Activated B cell treated with CpG ODN at 0.5 μM for 24 hours (primary cell): ENCODE measurements at regions of chr2 and their contacts with region 1.

Region 1: GRCh38 chr2:216081487-216082116 is at the starts of genes PECR and TMEM169:
- DNase-seq: peak; percentile 68
- ATAC-seq: peak; percentile 93
- H3K4me3 Mint-ChIP-seq: peak within 1 kb of the TSS; percentile 95
- H3K27ac Mint-ChIP-seq: peak within 1 kb of the TSS; percentile 85
- H3K4me1 Mint-ChIP-seq: peaks cover 49% of the 10 kb centered on the region
- H3K27me3 Mint-ChIP-seq: no peaks in the 10 kb centered on the region
- CTCF ChIP-seq: no peak
- total RNA-seq, gene PECR: 6.1 and 10.0 TPM in 2 replicates
- total RNA-seq, gene TMEM169: 0.40 and 0.69 TPM in 2 replicates

Region 2: DNA sequence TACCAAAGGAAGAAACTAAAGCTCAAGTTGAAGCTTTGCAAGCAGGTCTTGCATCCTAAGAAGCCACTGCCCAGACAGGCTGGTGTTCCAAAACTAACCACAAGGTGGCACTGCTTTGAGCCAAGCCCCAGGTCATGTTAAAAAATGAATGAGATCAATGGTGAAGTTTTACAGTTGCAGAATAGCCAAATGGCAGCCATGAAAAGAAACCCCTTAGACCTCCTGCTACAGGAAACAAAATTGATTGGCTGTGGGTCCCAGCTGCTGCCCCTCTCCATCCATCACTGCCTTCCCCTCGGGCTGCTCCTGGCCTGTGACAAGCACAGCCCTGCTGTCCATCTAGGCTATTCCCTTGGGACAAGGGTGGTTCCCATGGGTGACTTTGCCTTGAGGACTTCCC is 47.5 kb before region 1 on chr2:
- CTCF ChIA-PET with region 1: no interaction called
- POLR2A ChIA-PET with region 1: interaction called, 3 read pairs
- intact Hi-C with region 1: loop called (anchors 1 kb)
- DNase-seq: peak; percentile 53
- ATAC-seq: peak; percentile 93
- H3K4me3 Mint-ChIP-seq: no peak overlapping the region
- H3K27ac Mint-ChIP-seq: no peak overlapping the region
- H3K4me1 Mint-ChIP-seq: peaks cover 8% of the 10 kb centered on the region
- H3K27me3 Mint-ChIP-seq: no peaks in the 10 kb centered on the region
- CTCF ChIP-seq: peak; percentile 52

Region 3: GRCh38 chr2:216057688-216058193 is 23.9 kb before region 1 on chr2:
- CTCF ChIA-PET with region 1: no interaction called
- POLR2A ChIA-PET with region 1: interaction called, 4 read pairs
- intact Hi-C with region 1: loop called (anchors 1 kb)
- DNase-seq: peak; percentile 25
- ATAC-seq: peak; percentile 83
- H3K4me3 Mint-ChIP-seq: peak overlapping the region; percentile 84
- H3K27ac Mint-ChIP-seq: peak overlapping the region; percentile 96
- H3K4me1 Mint-ChIP-seq: peaks cover 29% of the 10 kb centered on the region
- H3K27me3 Mint-ChIP-seq: no peaks in the 10 kb centered on the region
- CTCF ChIP-seq: no peak

Region 4: DNA sequence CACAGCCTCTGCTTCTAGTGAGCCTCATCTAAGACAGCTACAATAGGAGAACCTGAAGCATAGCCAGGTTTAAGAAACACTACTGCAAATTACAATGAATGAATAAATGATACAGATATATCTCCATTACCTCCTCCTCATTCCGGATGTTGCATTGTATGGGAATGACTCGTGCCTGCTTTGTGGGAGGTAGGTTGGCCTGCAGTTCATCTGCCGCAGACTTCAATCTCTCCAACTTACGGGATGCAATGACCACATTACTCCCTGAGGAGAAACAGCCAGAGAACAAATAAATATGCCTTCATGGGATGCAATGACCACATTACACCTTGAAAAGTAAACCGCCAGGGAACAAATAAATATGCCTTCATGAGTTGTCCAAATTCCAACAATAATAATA is 15.3 kb before region 1 on chr2:
- CTCF ChIA-PET with region 1: no interaction called
- POLR2A ChIA-PET with region 1: no interaction called
- intact Hi-C with region 1: loop called (anchors 2 kb)
- DNase-seq: no peak
- ATAC-seq: no peak
- H3K4me3 Mint-ChIP-seq: no peak overlapping the region
- H3K27ac Mint-ChIP-seq: no peak overlapping the region
- H3K4me1 Mint-ChIP-seq: no peaks in the 10 kb centered on the region
- H3K27me3 Mint-ChIP-seq: no peaks in the 10 kb centered on the region
- CTCF ChIP-seq: no peak

Region 5: GRCh38 chr2:216108967-216109921 is 27.6 kb after region 1 on chr2 and contains the start of gene XRCC5:
- CTCF ChIA-PET with region 1: interaction called, 3 read pairs
- POLR2A ChIA-PET with region 1: interaction called, 15 read pairs
- intact Hi-C with region 1: loop called (anchors 1 kb)
- DNase-seq: peak; percentile 93
- ATAC-seq: peak; percentile 88
- H3K4me3 Mint-ChIP-seq: peak within 1 kb of the TSS; percentile 99
- H3K27ac Mint-ChIP-seq: peak within 1 kb of the TSS; percentile 99
- H3K4me1 Mint-ChIP-seq: peaks cover 57% of the 10 kb centered on the region
- H3K27me3 Mint-ChIP-seq: no peaks in the 10 kb centered on the region
- CTCF ChIP-seq: no peak
- total RNA-seq, gene XRCC5: 303 and 311 TPM in 2 replicates

Region 6: DNA sequence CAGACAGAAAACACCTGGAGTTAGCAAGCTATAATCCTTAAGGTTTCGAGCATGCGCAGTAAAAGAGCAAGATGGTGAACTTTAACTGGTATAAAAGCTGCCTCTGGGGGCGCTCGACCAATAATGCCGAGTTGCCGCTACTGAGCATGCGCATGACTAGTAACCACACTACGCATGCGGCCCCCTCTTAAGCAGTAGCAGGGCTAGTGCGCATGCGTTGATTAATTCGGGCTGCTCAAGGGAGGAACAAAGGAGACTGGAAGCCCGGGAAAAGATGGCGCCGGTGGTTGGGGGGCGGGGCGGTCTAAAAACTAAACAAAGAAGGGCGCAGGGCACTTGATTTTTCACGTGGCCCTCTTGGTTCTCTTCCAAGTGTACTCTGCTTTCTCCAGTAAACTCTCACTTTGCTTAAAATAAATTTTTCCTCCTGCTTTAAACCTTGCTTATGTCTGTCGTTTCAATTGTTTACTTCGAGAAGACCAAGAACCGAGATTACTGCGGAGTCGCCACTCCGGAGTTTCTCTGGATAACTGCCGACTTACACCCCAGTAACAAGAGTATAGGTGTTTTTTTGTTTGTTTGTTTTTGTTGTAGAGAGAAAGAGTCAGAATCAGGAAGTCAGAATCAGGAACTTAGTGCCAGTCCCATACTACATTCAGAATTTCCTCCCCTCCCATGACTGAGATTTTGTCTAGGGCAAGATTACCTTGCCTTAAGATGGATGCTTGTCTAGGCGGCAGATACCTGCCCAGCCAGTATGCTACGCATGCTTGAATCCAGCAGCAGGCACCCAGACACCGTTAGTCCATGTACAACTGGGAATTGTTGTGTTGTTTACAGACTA is 33.3 kb after region 1 on chr2:
- CTCF ChIA-PET with region 1: interaction called, 3 read pairs
- POLR2A ChIA-PET with region 1: interaction called, 15 read pairs
- intact Hi-C with region 1: no loop called
- DNase-seq: peak; percentile 85
- ATAC-seq: peak; percentile 91
- H3K4me3 Mint-ChIP-seq: peak overlapping the region; percentile 94
- H3K27ac Mint-ChIP-seq: peak overlapping the region; percentile 97
- H3K4me1 Mint-ChIP-seq: peaks cover 78% of the 10 kb centered on the region
- H3K27me3 Mint-ChIP-seq: no peaks in the 10 kb centered on the region
- CTCF ChIP-seq: no peak

Region 7: DNA sequence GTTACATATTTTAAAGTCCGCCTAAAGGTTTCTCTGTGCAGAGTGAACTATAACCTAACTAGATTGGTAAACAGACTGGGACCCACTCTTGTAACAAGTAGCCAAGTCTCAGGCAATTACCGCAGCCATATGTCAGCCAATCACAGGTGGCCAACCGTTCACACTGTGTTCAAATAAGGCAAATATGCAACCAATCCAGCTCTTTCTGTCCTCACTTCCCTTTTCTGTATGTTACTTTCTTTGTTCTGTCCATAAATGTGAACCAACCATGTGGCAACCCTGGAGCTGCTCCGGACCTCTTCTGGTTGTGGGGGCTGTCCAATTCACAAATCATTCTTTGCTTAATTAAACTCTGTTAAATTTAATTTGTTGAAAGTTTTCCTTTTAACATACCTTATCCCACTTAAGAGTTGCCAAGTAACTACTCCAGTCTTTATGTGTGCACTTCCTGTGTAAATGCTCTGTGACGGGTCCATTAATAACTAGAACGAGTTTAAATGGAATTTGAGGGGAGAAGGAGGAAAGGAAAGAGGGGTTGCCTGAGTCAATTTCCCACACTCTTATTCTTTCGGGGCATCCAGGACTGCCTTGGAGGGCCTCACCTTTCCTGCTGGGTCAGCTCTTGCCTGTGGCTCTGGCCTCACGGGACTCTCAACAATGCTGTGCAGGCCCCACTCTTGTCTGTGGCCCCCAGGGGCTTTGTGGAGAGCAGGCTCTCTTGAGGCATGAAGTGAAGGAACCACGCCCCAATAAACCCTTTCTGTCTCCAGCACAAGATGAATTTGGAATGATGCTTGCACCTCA is 410.4 kb after region 1 on chr2:
- CTCF ChIA-PET with region 1: no interaction called
- POLR2A ChIA-PET with region 1: no interaction called
- intact Hi-C with region 1: loop called (anchors 1 kb)
- DNase-seq: peak; percentile 48
- ATAC-seq: peak; percentile 93
- H3K4me3 Mint-ChIP-seq: peak overlapping the region; percentile 56
- H3K27ac Mint-ChIP-seq: peak overlapping the region; percentile 91
- H3K4me1 Mint-ChIP-seq: peaks cover 46% of the 10 kb centered on the region
- H3K27me3 Mint-ChIP-seq: no peaks in the 10 kb centered on the region
- CTCF ChIP-seq: no peak